Endothelial cell of umbilical vein (primary cell): ENCODE measurements at regions of chr14 and their contacts with region 1.

Region 1: DNA sequence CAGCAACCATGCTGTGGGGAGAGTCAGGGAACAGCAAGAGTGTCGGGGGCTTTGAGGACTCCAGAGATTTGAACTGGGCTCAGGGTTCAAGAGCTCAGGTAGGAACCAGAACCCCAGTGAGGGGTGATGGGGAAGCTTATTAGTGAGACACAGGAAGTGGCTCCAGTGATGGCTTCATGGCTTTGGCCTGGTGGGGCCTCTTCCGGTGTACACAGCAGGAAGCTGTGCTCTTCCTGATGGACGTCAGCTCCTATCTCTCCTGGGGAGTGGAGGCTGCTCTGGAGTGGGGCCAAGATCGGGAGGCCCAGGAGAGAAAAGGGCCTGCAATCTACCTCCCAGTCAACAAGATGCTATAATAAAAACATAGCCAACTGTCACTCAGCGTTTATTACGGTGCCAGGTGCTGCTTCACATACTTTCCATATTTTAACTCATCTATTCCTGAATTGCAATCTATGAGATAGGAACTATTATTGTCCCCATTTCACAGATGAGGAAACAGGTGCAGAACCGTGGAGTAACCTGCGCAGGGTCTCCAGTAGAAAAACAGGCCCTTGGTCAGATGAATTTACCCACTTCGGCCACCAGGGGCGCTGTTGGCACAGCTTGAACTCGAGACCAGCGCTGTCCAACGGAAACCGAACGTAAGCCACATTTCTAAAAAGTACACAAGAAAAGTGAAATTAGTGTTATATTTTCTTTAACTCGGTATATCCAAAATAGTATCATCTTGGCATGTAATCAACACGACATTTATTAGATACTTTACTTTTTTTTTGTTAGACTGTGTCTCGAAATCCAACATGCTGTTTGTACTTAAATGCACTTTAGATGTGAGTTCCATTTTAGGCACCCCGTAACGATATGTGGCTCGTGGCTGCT is 63.6 kb upstream of the DLK1 start:
- DNase-seq: peak; percentile 66
- H3K4me3 ChIP-seq: no peak overlapping the region
- H3K27ac ChIP-seq: no peak overlapping the region
- H3K4me1 ChIP-seq: peaks cover 6% of the 10 kb centered on the region
- H3K27me3 ChIP-seq: no peaks in the 10 kb centered on the region
- CTCF ChIP-seq: peak; percentile 81 to 96
- POLR2A ChIP-seq: no peak

Region 2: GRCh38 chr14:100645192-100645990 is 17.7 kb before region 1 on chr14:
- CTCF ChIA-PET with region 1: interaction called, 51 read pairs
- POLR2A ChIA-PET with region 1: no interaction called
- dilution Hi-C with region 1: no loop called
- intact Hi-C with region 1: no loop called
- DNase-seq: peak; percentile 68
- H3K4me3 ChIP-seq: no peak overlapping the region
- H3K27ac ChIP-seq: no peak overlapping the region
- H3K4me1 ChIP-seq: peaks cover 14% of the 10 kb centered on the region
- H3K27me3 ChIP-seq: peaks cover under 1 to 4% of the 10 kb centered on the region in 2 experiments
- CTCF ChIP-seq: peak; percentile 72 to 83
- POLR2A ChIP-seq: no peak

Region 3: DNA sequence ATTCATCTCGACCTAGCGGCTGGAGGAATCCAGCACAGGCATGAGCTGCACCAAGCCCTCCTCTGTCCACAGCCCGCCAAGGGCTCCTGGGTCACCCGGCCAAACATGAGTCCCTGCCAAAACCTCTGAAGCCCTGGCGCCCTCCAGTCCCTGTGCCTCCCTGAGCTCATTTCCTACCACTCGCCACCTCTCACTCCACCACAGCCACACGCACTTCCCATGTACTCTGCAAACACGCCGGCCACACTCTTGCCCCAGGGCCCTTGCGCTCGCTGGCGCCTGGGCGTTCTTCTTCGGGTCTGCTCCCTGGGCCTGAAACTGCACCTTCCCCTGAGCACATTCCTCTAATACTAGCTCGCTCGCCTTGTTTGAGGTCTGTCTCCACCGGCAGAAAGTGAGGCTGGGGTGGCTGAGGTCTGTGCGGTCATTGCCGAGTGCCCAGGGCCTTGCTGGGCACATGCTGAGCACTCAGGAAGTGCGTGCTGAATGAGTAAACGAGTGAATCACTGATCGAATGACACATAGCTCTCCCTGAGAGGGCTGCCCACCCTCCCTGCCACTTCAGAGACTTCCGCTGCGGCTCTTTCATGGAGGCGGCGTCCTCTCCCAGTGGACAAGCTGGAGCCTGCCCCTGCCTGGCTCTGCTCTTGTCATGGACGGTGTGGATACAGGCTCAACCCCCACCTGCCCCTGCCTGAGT is 29.9 kb after region 1 on chr14:
- CTCF ChIA-PET with region 1: interaction called, 12 read pairs
- POLR2A ChIA-PET with region 1: no interaction called
- dilution Hi-C with region 1: no loop called
- intact Hi-C with region 1: loop called (anchors 1 kb)
- DNase-seq: peak; percentile 87
- H3K4me3 ChIP-seq: no peak overlapping the region
- H3K27ac ChIP-seq: peak overlapping the region; percentile 88
- H3K4me1 ChIP-seq: peaks cover 21% of the 10 kb centered on the region
- H3K27me3 ChIP-seq: no peaks in the 10 kb centered on the region
- CTCF ChIP-seq: no peak
- POLR2A ChIP-seq: peak; percentile 68

Region 4: GRCh38 chr14:100828031-100828769 is 165.1 kb after region 1 on chr14:
- CTCF ChIA-PET with region 1: interaction called, 9 read pairs
- POLR2A ChIA-PET with region 1: interaction called, 6 read pairs
- dilution Hi-C with region 1: no loop called
- intact Hi-C with region 1: loop called (anchors 1 kb)
- DNase-seq: peak; percentile 72
- H3K4me3 ChIP-seq: peak overlapping the region; percentile 67 to 78 (median 72)
- H3K27ac ChIP-seq: no peak overlapping the region
- H3K4me1 ChIP-seq: no peaks in the 10 kb centered on the region
- H3K27me3 ChIP-seq: peaks cover 0 to 4% of the 10 kb centered on the region in 2 experiments
- CTCF ChIP-seq: peak; percentile 74 to 75
- POLR2A ChIP-seq: no peak

Region 5: DNA sequence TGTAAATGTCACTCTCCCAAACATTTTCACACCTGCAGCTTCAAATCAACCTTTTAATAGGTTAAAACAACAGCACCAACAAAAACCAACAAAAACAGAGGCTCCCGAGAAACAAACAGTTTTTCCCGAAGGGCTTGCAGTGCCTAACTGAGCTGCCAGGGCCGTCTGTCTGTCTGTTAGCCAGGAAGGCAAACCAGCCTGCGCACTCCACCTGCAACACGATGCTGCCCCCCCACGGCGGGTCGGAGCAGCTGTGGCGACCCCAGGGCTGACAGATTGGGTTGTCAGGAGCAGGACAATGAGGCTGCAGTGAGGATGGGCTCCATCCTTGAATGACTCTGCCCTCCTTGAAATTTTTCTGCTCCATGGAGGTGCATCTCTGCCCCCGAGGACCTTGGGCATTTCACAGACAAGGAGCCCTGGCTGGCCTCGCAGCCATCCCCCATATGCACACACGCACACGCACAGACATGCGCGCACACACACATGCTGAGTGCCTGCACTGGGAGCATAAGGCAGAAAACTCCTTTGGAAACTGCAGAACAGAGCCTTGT is 237.8 kb after region 1 on chr14:
- CTCF ChIA-PET with region 1: interaction called, 4 read pairs
- POLR2A ChIA-PET with region 1: no interaction called
- dilution Hi-C with region 1: no loop called
- intact Hi-C with region 1: loop called (anchors 1 kb)
- DNase-seq: peak; percentile 8
- H3K4me3 ChIP-seq: no peak overlapping the region
- H3K27ac ChIP-seq: no peak overlapping the region
- H3K4me1 ChIP-seq: peaks cover 13% of the 10 kb centered on the region
- H3K27me3 ChIP-seq: peaks cover 3 to 6% of the 10 kb centered on the region in 2 experiments
- CTCF ChIP-seq: peak; percentile 8 to 42
- POLR2A ChIP-seq: no peak

Region 6: DNA sequence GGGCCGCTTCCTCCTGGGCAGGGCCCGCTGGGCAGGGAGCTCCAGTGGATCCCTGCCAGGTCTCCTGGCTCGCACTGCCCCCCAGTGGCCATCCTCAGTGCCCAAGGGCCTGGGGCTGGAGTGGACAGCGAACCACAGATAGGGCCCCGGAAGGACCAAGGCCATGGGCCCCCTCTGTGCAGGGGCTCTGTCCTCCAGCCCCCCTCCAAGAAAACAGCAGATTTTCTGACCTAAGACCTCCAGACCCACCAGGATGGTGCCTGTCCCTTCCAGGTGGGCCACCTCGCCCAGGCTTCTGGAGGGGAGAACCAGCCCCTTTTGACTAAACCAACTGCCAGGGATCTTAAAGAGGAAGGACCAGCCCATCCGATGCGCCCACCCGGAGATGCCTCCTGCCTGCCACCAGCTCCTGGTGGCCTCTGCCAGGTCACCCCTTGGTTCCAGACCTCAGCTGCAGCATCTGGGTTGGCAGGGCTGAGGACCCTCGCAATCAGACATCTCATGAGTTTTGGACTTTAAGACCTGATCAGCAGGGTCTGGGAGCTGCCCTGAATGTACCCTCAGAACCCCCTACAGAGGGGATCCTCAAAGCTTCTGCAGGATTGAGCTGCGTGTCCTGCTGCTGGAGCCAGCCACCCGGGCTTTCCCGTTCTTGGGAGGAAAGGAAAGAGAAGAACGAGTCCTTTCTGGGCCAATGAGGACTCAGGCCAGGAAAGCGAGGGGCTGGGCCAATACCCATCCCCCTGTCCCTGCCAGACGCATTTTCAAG is 572.4 kb after region 1 on chr14:
- CTCF ChIA-PET with region 1: interaction called, 4 read pairs
- POLR2A ChIA-PET with region 1: no interaction called
- dilution Hi-C with region 1: no loop called
- intact Hi-C with region 1: loop called (anchors 1 kb)
- DNase-seq: peak; percentile 55
- H3K4me3 ChIP-seq: no peak overlapping the region
- H3K27ac ChIP-seq: no peak overlapping the region
- H3K4me1 ChIP-seq: no peaks in the 10 kb centered on the region
- H3K27me3 ChIP-seq: no peaks in the 10 kb centered on the region
- CTCF ChIP-seq: peak; percentile 79 to 95
- POLR2A ChIP-seq: no peak

Region 7: DNA sequence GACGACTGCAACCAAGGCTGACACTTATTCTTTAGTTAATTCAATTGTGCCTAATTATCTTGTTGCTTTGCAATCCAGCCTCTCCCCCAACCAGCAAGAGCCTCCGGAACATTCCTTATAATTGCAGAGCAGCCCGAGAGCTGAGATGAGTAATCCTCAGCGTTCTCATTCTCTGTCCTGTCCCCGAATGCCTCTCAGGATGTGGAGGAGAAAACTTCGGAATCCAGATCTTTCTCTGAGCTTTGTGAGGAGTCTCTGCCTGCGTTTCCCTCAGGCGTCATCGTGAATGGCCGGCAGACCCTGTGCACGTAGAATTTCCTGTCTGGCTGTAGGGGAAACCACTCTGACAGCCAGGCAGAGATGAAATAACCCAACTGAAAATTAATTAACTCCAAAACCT is 737.7 kb after region 1 on chr14:
- CTCF ChIA-PET with region 1: no interaction called
- POLR2A ChIA-PET with region 1: no interaction called
- dilution Hi-C with region 1: no loop called
- intact Hi-C with region 1: no loop called
- DNase-seq: peak; percentile 16
- H3K4me3 ChIP-seq: no peak overlapping the region
- H3K27ac ChIP-seq: no peak overlapping the region
- H3K4me1 ChIP-seq: no peaks in the 10 kb centered on the region
- H3K27me3 ChIP-seq: peaks cover 0 to 4% of the 10 kb centered on the region in 2 experiments
- CTCF ChIP-seq: no peak
- POLR2A ChIP-seq: no peak